Heart right ventricle (tissue), 16 donors: ENCODE measurements at regions of chr12 and their contacts with region 1.

Region 1: GRCh38 chr12:13627536-13627935 is 353.9 kb downstream of the GRIN2B start:
- DNase-seq: no peak
- ATAC-seq: no peak
- H3K4me3 ChIP-seq: no peak overlapping the region
- H3K27ac ChIP-seq: no peak overlapping the region
- H3K4me1 ChIP-seq: no peaks in the 10 kb centered on the region
- H3K27me3 ChIP-seq: peaks cover 0 to 7% (median 0%) of the 10 kb centered on the region in 7 donors
- CTCF ChIP-seq: no peak

Region 2: DNA sequence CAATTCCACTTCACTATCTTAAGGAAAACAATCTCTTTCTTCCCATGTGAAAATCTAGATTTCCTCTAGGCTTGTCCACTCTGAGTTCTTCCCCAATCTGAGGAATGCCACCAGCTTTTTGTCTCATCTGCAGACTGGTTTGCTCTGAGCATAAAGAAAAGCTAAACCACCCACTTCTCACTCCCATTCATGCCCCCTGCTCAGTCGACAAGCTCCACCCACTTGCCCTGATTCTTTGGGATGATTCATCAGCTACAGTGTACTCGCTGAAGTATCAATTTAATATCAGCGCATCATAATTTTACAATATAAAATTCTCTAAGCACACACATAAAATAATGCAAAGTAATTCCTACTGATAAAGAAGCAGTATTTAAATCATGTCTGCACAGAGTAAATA is 144.7 kb after region 1 on chr12:
- intact Hi-C with region 1: no loop called
- DNase-seq: no peak
- ATAC-seq: no peak
- H3K4me3 ChIP-seq: no peak overlapping the region
- H3K27ac ChIP-seq: no peak overlapping the region
- H3K4me1 ChIP-seq: no peaks in the 10 kb centered on the region
- H3K27me3 ChIP-seq: peaks cover 0 to 8% (median 0%) of the 10 kb centered on the region in 7 donors
- CTCF ChIP-seq: no peak

Region 3: GRCh38 chr12:13857750-13858149 is 230.2 kb after region 1 on chr12:
- intact Hi-C with region 1: loop called in 1 of 10 experiments (anchors 5 kb)
- DNase-seq: no peak
- ATAC-seq: no peak
- H3K4me3 ChIP-seq: no peak overlapping the region
- H3K27ac ChIP-seq: no peak overlapping the region
- H3K4me1 ChIP-seq: peaks cover 0 to 9% (median 0%) of the 10 kb centered on the region in 9 donors
- H3K27me3 ChIP-seq: peaks cover 0 to 22% (median 0%) of the 10 kb centered on the region in 7 donors
- CTCF ChIP-seq: no peak